CD4-positive, alpha-beta memory T cell (primary cell): ENCODE measurements at regions of chr19 and their contacts with region 1.

Region 1: GRCh38 chr19:47608074-47608918 is 638 bp upstream of the BICRA start:
- DNase-seq: peak; percentile 93 to 98 (median 96)
- H3K4me3 ChIP-seq: peak overlapping the region; percentile 52 to 89
- H3K4me3 Mint-ChIP-seq: peak overlapping the region; percentile 80 to 89 (median 83)
- H3K27ac ChIP-seq: peak overlapping the region; percentile 88
- H3K27ac Mint-ChIP-seq: peak overlapping the region; percentile 63 to 88 (median 77)
- H3K4me1 ChIP-seq: peaks cover 30% of the 10 kb centered on the region
- H3K4me1 Mint-ChIP-seq: peaks cover 17 to 36% (median 25%) of the 10 kb centered on the region in 4 donors
- H3K27me3 ChIP-seq: no peaks in the 10 kb centered on the region
- H3K27me3 Mint-ChIP-seq: no peaks in the 10 kb centered on the region

Region 2: GRCh38 chr19:46634045-46634655 is 974.1 kb before region 1 on chr19:
- CTCF ChIA-PET with region 1: no interaction called
- POLR2A ChIA-PET with region 1: no interaction called
- intact Hi-C with region 1: loop called (anchors 5 kb)
- DNase-seq: peak; percentile 93 to 98 (median 94)
- H3K4me3 ChIP-seq: peak overlapping the region; percentile 61 to 64
- H3K4me3 Mint-ChIP-seq: peak overlapping the region; percentile 68 to 88 (median 81)
- H3K27ac ChIP-seq: peak overlapping the region; percentile 57
- H3K27ac Mint-ChIP-seq: peak overlapping the region; percentile 87 to 94 (median 93)
- H3K4me1 ChIP-seq: peaks cover 33% of the 10 kb centered on the region
- H3K4me1 Mint-ChIP-seq: peaks cover 14 to 28% (median 22%) of the 10 kb centered on the region in 4 donors
- H3K27me3 ChIP-seq: no peaks in the 10 kb centered on the region
- H3K27me3 Mint-ChIP-seq: peaks cover 0 to 1% of the 10 kb centered on the region in 2 donors

Region 3: DNA sequence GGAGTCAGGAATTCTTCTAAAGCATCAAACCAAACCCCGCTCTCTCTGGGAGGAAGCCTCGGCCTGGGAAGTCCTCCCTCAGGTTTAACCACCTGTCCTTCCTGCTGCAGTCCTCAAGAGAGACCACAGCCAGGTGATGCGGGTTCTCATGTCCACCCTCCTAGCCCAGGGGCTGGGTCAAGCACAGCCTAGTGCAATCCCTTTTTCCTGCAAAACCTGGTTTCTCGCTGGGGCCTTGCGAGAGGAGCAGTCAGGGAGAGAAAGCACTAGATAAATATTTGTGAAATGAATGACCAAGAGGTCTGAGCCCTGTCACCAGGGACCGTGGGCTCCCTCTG is 139.0 kb before region 1 on chr19:
- CTCF ChIA-PET with region 1: no interaction called
- POLR2A ChIA-PET with region 1: no interaction called
- intact Hi-C with region 1: no loop called
- DNase-seq: no peak
- H3K4me3 ChIP-seq: no peak overlapping the region
- H3K4me3 Mint-ChIP-seq: no peak overlapping the region
- H3K27ac ChIP-seq: no peak overlapping the region
- H3K27ac Mint-ChIP-seq: no peak overlapping the region
- H3K4me1 ChIP-seq: peaks cover 12% of the 10 kb centered on the region
- H3K4me1 Mint-ChIP-seq: peaks cover 10 to 14% (median 11%) of the 10 kb centered on the region in 4 donors
- H3K27me3 ChIP-seq: peaks cover 37% of the 10 kb centered on the region
- H3K27me3 Mint-ChIP-seq: peaks cover 52 to 57% of the 10 kb centered on the region in 2 donors

Region 4: DNA sequence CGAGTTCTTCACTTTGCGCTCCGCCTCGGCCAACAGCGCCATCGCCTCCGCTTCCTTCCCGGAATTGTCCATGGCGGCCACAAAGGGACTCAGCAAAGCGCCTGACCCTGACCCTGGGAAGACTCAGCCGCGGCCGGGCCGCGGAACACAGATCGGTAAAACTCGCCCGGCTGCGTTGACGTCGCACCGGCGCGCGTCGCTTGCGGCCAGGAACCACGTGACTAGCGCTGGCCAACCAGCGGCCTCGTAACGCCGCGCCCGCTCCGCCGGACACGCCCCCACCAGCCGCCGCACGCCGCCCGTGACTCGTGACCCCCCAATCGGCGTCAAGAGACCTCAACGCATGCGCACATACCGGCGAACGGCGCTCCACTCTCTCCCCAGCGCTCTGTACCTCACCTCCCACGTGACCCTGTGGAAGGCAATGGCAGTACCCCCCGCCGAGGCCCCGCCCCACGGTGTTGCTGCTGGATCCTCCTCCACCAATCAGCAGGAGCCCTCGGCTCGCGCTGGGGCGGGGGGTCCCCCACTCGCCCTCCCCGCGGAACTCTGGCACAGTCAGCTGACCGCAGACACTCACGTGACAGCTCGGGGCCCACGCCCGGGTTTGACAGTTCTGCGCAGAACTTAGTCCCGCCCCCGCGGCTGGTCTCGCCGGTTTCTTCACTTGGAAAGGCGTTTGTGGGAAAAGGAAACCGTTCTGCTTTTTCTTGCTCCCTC is 93.3 kb before region 1 on chr19 and contains the start of gene NAPA:
- CTCF ChIA-PET with region 1: interaction called, 15 read pairs
- POLR2A ChIA-PET with region 1: interaction called, 50 read pairs
- intact Hi-C with region 1: loop called (anchors 1 kb)
- DNase-seq: peak; percentile 100
- H3K4me3 ChIP-seq: peak within 1 kb of the TSS; percentile 95 to 98
- H3K4me3 Mint-ChIP-seq: peak within 1 kb of the TSS; percentile 97 to 99 (median 98)
- H3K27ac ChIP-seq: peak within 1 kb of the TSS; percentile 97
- H3K27ac Mint-ChIP-seq: peak within 1 kb of the TSS; percentile 97 to 99 (median 98)
- H3K4me1 ChIP-seq: peaks cover 64% of the 10 kb centered on the region
- H3K4me1 Mint-ChIP-seq: peaks cover 50 to 87% (median 66%) of the 10 kb centered on the region in 4 donors
- H3K27me3 ChIP-seq: no peaks in the 10 kb centered on the region
- H3K27me3 Mint-ChIP-seq: no peaks in the 10 kb centered on the region
- total RNA-seq, gene NAPA: 84.1 to 88.1 TPM

Region 5: GRCh38 chr19:47573071-47574026 is 34.9 kb before region 1 on chr19 and contains the start of gene ZNF541:
- CTCF ChIA-PET with region 1: no interaction called
- POLR2A ChIA-PET with region 1: interaction called, 19 read pairs
- intact Hi-C with region 1: loop called (anchors 1 kb)
- DNase-seq: peak; percentile 87 to 90 (median 88)
- H3K4me3 ChIP-seq: peak within 1 kb of the TSS in 1 of 2 donors; percentile 46
- H3K4me3 Mint-ChIP-seq: peak within 1 kb of the TSS; percentile 59 to 79 (median 70)
- H3K27ac ChIP-seq: no peak within 1 kb of the TSS
- H3K27ac Mint-ChIP-seq: peak within 1 kb of the TSS; percentile 37 to 87 (median 70)
- H3K4me1 ChIP-seq: peaks cover 27% of the 10 kb centered on the region
- H3K4me1 Mint-ChIP-seq: peaks cover 25 to 45% (median 34%) of the 10 kb centered on the region in 4 donors
- H3K27me3 ChIP-seq: no peaks in the 10 kb centered on the region
- H3K27me3 Mint-ChIP-seq: no peaks in the 10 kb centered on the region
- total RNA-seq, gene ZNF541: 0.53 to 0.79 TPM

Region 6: DNA sequence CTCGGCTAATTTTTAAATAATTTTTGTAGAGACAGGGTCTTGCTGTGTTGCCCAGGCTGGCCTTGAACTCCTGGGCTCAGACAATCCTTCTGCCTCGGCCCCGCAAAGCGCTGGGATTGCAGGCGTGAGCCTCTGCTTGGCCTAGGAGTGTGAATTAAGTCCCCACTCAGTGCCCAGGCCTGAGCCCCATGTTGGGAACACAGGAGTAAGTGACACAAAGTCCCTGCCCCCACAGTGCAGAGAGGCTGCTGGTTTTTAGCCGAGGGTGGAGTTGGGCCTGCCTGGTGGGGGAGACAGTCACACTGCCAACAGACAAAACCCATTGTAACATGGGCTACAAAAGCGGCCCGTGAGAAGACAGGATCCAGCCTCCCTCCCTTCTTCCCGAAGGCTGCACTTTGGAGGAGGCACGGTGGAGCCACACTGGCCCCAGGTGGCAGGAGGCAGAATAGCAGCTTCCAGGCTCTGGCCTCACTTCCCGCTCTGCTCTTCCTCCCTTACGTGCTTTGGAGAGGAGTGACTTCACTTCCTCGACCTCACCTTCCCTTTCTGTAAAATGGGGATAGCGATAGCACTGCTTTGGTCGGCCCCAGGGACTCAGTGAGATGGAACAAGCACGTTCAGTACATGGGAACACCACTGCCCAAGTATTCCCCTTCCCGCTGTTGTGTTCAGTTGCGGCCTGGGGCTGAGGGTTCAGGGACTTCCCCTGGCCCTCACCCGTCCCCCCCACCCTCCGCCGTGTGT is 89.7 kb after region 1 on chr19:
- CTCF ChIA-PET with region 1: interaction called, 11 read pairs
- POLR2A ChIA-PET with region 1: no interaction called
- intact Hi-C with region 1: loop called (anchors 5 kb)
- DNase-seq: peak; percentile 46 to 54 (median 51)
- H3K4me3 ChIP-seq: no peak overlapping the region
- H3K4me3 Mint-ChIP-seq: no peak overlapping the region
- H3K27ac ChIP-seq: no peak overlapping the region
- H3K27ac Mint-ChIP-seq: no peak overlapping the region
- H3K4me1 ChIP-seq: no peaks in the 10 kb centered on the region
- H3K4me1 Mint-ChIP-seq: peaks cover 0 to 4% (median 2%) of the 10 kb centered on the region in 4 donors
- H3K27me3 ChIP-seq: no peaks in the 10 kb centered on the region
- H3K27me3 Mint-ChIP-seq: no peaks in the 10 kb centered on the region